Activated CD4-positive, alpha-beta T cell treated with anti-CD3 and anti-CD28 coated beads for 36 hours (primary cell): ENCODE measurements at regions of chr1 and their contacts with region 1.

Region 1: DNA sequence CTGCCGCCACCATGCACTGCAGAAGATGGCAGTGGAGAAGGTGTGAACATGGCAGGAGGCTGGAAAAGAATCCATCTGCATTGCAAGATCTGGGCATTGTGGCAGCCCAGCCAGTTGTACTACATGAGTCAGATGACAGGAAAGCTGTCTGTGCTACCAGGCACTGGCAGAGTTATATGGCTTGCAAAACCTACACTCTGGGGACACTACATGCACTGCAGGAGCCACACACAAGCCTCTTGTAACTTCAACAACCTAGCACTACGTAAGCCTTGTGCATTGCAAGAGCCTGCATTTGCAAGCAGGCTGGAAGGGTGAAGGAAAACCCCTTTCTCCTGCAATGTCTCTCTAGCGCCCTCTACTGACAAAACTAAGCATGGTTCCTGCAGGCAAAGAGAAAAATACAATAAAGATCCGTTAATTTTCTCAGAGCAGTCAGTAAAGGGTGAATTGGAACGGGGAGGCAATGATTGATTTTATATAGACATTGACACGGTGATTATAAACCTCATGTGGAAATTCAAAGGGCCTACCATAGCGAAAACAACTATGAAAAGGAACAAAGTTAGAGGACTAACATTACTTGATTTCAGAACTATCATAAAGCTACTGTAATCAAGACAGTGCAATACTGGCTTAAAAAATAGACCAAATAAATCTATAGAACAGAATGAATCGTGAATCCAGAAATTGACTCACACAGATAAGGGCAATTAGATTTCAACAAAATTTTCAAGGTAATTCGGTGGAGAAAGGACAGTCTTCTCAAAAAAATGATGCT is 26.2 kb upstream of the DYNLT5 start:
- DNase-seq: peak; percentile 71
- ATAC-seq: peak; percentile 80
- H3K4me3 Mint-ChIP-seq: no peak overlapping the region
- H3K27ac Mint-ChIP-seq: no peak overlapping the region
- H3K4me1 Mint-ChIP-seq: peaks cover 20% of the 10 kb centered on the region
- H3K27me3 Mint-ChIP-seq: peaks cover 14% of the 10 kb centered on the region

Region 2: DNA sequence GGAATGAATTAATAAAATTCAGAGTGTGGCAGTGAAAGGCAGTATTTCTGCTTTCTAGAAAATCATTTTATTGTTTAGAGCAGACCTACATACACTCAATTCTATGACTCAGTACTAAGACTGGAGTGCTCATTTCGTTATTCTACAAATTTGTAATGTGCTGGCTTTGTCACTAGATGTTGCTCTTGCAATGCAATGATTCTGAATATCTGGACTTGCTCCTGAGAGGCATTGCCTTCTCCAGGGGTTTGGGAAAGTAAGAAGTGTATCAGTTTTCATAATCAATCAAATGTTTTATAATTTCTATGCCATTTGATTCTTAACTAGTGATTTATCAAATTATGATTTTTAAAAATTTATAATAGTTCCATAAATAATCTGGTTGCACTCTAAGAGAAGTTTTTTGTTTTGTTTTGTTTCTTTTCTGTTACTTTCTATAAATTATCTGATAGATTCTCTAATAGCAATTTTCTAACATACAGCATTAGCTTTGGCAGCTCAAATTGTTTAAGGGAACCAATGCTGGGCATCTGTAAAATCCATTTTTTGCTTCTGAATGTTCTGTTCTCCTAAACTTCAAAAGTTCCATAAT is 472.6 kb before region 1 on chr1:
- CTCF ChIA-PET with region 1: no interaction called
- POLR2A ChIA-PET with region 1: no interaction called
- intact Hi-C with region 1: loop called (anchors 2 to 5 kb)
- DNase-seq: no peak
- ATAC-seq: peak; percentile 81
- H3K4me3 Mint-ChIP-seq: no peak overlapping the region
- H3K27ac Mint-ChIP-seq: no peak overlapping the region
- H3K4me1 Mint-ChIP-seq: peaks cover 49% of the 10 kb centered on the region
- H3K27me3 Mint-ChIP-seq: no peaks in the 10 kb centered on the region

Region 3: DNA sequence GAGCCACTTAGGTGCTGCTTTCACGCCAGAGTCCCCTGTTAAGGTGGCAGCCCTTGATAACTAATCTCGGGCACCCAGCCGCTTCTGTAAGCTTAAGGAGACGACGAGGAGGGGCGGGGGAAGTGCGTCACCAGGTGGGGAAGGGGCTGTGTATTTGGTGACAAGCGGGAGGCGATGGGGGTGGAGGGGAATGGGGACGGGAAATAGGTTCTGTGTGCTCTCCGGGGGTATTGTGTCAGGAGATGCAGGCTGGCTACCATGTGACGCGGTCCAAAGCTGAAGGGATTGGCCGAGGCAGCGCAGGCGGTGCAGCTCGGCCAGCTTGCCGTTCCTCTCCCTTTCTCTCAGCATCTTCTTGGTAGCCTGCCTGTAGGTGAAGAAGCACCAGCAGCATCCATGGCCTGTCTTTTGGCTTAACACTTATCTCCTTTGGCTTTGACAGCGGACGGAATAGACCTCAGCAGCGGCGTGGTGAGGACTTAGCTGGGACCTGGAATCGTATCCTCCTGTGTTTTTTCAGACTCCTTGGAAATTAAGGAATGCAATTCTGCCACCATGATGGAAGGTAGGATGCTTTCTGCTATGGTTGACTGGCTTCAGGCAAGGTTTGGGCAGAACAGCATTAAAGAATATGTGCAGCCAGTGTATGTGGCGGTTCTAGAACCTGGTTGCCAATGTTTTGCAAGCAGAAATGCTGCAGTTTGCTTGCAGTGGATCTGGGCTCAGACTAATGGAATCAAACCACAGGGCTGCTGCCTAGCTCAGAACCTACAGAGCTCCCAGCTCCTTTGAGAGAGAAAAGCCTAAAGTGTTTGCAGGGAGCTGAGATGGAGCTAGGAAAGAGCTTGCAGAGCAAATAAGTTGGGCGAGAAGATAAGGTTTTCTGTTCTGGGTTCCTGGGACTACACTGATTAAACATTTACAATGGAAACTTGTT is 192.0 kb before region 1 on chr1 and contains the start of gene SGIP1:
- CTCF ChIA-PET with region 1: interaction called, 4 read pairs
- POLR2A ChIA-PET with region 1: no interaction called
- intact Hi-C with region 1: loop called (anchors 10 kb)
- DNase-seq: peak; percentile 39
- ATAC-seq: peak; percentile 55
- H3K4me3 Mint-ChIP-seq: peak within 1 kb of the TSS; percentile 76
- H3K27ac Mint-ChIP-seq: peak within 1 kb of the TSS; percentile 44
- H3K4me1 Mint-ChIP-seq: peaks cover 13% of the 10 kb centered on the region
- H3K27me3 Mint-ChIP-seq: peaks cover 35% of the 10 kb centered on the region
- total RNA-seq, gene SGIP1: 0.02 to 0.05 TPM

Region 4: GRCh38 chr1:66624412-66625060 is 101.5 kb before region 1 on chr1:
- CTCF ChIA-PET with region 1: interaction called, 4 read pairs
- POLR2A ChIA-PET with region 1: no interaction called
- intact Hi-C with region 1: loop called in 1 of 2 experiments (anchors 5 kb)
- DNase-seq: no peak
- ATAC-seq: peak; percentile 83
- H3K4me3 Mint-ChIP-seq: no peak overlapping the region
- H3K27ac Mint-ChIP-seq: peak overlapping the region; percentile 44
- H3K4me1 Mint-ChIP-seq: peaks cover 15% of the 10 kb centered on the region
- H3K27me3 Mint-ChIP-seq: peaks cover 3% of the 10 kb centered on the region

Region 5: GRCh38 chr1:66739401-66740157 is 13.5 kb after region 1 on chr1:
- CTCF ChIA-PET with region 1: interaction called, 16 read pairs
- POLR2A ChIA-PET with region 1: no interaction called
- intact Hi-C with region 1: no loop called
- DNase-seq: no peak
- ATAC-seq: no peak
- H3K4me3 Mint-ChIP-seq: no peak overlapping the region
- H3K27ac Mint-ChIP-seq: no peak overlapping the region
- H3K4me1 Mint-ChIP-seq: no peaks in the 10 kb centered on the region
- H3K27me3 Mint-ChIP-seq: no peaks in the 10 kb centered on the region

Region 6: GRCh38 chr1:66929999-66930822 is 204.1 kb after region 1 on chr1:
- CTCF ChIA-PET with region 1: no interaction called
- POLR2A ChIA-PET with region 1: no interaction called
- intact Hi-C with region 1: no loop called
- DNase-seq: peak; percentile 96
- ATAC-seq: peak; percentile 63
- H3K4me3 Mint-ChIP-seq: peak overlapping the region; percentile 86
- H3K27ac Mint-ChIP-seq: peak overlapping the region; percentile 94
- H3K4me1 Mint-ChIP-seq: peaks cover 53% of the 10 kb centered on the region
- H3K27me3 Mint-ChIP-seq: no peaks in the 10 kb centered on the region